Ascending aorta (tissue), 2 donors: ENCODE measurements at regions of chrX and their contacts with region 1.

Region 1: DNA sequence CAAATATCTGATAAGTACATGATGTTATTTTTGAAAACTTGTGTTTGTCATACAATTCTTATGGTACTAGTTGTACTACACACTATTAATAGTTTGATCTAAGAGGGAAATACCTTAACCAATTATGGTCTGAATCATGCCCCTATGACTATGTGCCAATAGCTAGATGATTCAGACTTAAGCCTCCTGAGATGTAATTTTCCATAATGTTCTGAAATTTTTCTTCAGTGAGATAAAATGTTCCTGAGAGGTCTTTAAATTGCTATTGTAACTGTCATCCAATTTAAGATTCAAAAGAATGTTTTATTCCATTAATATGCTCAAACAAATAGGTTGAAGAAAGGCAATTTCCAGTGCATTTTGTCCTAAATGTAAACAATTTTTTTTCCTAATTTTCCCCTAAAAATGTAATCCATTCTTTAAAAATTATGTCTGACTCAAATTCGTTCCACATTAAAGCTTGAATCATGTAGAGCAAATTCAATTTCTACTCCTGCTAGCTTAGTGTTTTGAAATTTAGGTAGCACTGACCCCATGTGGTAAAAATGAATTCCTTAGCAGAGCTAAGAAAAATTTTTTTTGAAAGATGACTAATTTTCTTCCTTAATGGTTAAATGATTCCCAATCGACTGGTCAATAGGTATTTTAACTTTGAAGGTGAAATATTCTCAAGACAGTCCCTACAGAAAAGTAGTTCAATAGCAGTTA is 49.1 kb downstream of the APOOL start:
- DNase-seq: no peak
- H3K4me3 ChIP-seq: no peak overlapping the region
- H3K27ac ChIP-seq: peak overlapping the region; percentile 53 to 67
- H3K4me1 ChIP-seq: peaks cover 0 to 9% of the 10 kb centered on the region in 2 donors
- H3K27me3 ChIP-seq: no peaks in the 10 kb centered on the region
- CTCF ChIP-seq: peak; percentile 29 to 45 (median 33)

Region 2: GRCh38 chrX:84188320-84188834 is 864.4 kb before region 1 on chrX:
- intact Hi-C with region 1: loop called (anchors 10 kb)
- DNase-seq: peak in 1 of 2 donors; percentile 67
- H3K4me3 ChIP-seq: peak overlapping the region; percentile 69 to 81
- H3K27ac ChIP-seq: peak overlapping the region; percentile 67 to 79
- H3K4me1 ChIP-seq: no peaks in the 10 kb centered on the region
- H3K27me3 ChIP-seq: no peaks in the 10 kb centered on the region
- CTCF ChIP-seq: no peak

Region 3: GRCh38 chrX:84363663-84364062 is 689.1 kb before region 1 on chrX:
- intact Hi-C with region 1: loop called (anchors 10 kb)
- DNase-seq: no peak
- H3K4me3 ChIP-seq: peak overlapping the region; percentile 21 to 39
- H3K27ac ChIP-seq: peak overlapping the region in 1 of 2 donors; percentile 4
- H3K4me1 ChIP-seq: no peaks in the 10 kb centered on the region
- H3K27me3 ChIP-seq: no peaks in the 10 kb centered on the region
- CTCF ChIP-seq: no peak

Region 4: DNA sequence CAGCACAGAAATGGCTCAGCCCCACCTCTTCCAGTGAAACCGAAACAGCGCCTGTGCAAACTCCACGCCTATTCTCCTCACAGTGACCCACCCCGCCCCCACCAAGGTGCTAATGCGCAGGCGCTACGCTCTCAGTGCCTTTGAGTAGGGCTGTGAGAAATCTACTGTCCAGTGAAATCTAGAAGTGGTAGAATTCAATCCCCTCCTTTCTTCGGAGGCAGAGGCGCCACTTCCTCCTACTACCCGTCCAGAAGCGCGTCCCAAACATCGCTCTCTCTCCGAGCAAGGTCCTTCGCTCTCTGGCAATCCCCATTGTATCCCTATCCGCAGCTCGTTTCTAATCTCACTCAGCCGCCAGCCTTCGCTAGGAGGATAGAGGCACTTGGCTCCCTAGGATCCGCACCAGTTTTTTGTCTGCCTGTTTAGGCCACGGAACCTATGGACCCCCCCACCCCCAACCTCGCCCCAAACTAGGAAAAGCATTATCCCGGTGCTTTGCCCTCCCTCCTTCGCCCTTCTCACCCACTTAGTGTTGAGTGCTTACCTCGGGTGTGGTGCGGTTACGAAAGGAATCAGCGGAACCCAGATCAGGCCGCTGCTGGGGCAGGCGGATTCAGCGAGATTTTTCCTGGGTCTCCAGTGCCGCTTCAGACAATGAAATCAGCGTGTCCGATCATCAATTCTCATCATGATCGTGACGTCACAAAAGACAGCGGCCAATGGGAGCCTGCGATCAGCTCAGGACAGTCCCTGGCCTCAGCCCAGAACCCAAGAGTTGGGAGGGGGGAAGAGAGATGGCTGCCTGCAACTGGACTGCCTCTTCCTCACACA is 550.8 kb before region 1 on chrX and contains the start of gene HDX:
- intact Hi-C with region 1: loop called (anchors 10 kb)
- DNase-seq: peak; percentile 26 to 93
- H3K4me3 ChIP-seq: peak within 1 kb of the TSS; percentile 48 to 79
- H3K27ac ChIP-seq: peak within 1 kb of the TSS; percentile 82 to 96
- H3K4me1 ChIP-seq: no peaks in the 10 kb centered on the region
- H3K27me3 ChIP-seq: no peaks in the 10 kb centered on the region
- CTCF ChIP-seq: no peak
- total RNA-seq, gene HDX: 5.3 TPM

Region 5: DNA sequence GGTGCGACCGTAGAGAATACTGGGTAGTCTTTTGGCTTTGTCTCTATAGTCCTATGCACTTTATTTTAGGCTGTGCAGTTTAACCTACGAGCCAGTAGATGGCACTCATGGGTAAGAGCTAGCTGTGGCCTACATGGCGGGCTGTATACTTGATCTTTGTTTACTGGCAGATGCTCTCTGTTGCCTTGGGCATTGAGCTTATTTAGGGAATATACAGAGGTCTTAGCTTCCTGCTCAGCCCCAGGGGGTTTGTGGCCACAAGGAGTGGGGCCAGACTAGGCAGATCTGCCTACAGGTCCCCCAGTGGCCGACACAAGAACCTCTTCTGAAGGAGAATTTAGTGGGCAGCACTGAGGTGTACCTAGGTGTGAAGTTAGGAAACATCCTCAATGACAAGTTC is 323.0 kb before region 1 on chrX:
- intact Hi-C with region 1: loop called (anchors 2 kb)
- DNase-seq: no peak
- H3K4me3 ChIP-seq: no peak overlapping the region
- H3K27ac ChIP-seq: no peak overlapping the region
- H3K4me1 ChIP-seq: no peaks in the 10 kb centered on the region
- H3K27me3 ChIP-seq: no peaks in the 10 kb centered on the region
- CTCF ChIP-seq: peak; percentile 54 to 83 (median 71)

Region 6: GRCh38 chrX:84873176-84873575 is 179.6 kb before region 1 on chrX:
- intact Hi-C with region 1: loop called (anchors 10 kb)
- DNase-seq: no peak
- H3K4me3 ChIP-seq: no peak overlapping the region
- H3K27ac ChIP-seq: peak overlapping the region; percentile 59 to 70
- H3K4me1 ChIP-seq: peaks cover 0 to 4% of the 10 kb centered on the region in 2 donors
- H3K27me3 ChIP-seq: no peaks in the 10 kb centered on the region
- CTCF ChIP-seq: no peak

Region 7: DNA sequence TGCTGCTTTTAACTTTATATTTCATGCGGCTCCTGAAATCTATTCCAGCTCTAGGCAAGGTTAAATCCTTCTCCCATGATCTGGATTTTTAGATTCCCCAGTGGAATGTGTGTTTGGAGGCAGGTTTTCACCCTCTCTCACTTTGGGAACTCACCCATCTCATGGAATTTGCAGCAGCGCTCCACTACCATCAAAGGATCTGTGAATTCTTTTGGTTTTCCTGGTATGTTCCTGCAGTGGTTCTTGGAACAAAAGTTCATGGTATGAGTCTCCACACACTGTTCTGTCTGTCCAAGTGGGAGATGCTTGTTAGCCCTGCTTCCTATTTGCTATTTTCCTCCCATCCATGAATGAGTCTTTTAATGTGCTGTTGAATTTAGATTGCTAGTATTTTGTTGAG is 35.1 kb before region 1 on chrX:
- intact Hi-C with region 1: no loop called
- DNase-seq: no peak
- H3K4me3 ChIP-seq: no peak overlapping the region
- H3K27ac ChIP-seq: no peak overlapping the region
- H3K4me1 ChIP-seq: no peaks in the 10 kb centered on the region
- H3K27me3 ChIP-seq: no peaks in the 10 kb centered on the region
- CTCF ChIP-seq: no peak